ENCODE measurements at regions of chr15 and their contacts with region 1.

Region 1: GRCh38 chr15:89419382-89419984 is 76.9 kb downstream of the RHCG start:
- DNase-seq: no peak

Region 2: DNA sequence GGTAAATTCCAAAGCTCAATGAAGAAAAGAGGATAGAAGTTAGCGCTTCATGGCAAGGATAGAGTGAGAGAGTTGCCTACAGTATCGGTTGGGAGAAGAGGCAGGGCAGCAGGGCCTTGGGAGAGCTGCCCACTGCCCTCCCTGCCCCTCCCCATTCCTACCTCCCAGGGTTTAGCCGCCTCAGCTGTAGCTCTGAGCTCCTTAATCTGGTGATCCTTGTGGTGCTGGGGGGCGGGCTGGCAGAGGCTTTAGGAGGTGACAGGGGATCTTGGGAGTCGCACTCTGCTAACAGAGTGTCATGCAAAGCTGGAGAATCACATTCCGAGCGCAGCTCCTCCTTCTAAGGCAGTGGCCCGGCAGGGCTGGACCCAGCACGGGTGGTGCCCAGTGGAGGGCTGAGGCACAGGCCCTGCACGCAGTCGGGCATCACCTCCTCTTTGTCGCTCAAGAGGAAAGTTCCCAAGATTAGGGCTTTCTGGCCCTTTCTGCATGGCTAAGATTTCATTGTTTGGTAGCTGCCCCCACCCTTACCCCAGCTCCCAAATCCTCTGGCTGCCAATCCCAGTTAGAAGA is 27.7 kb before region 1 on chr15:
- intact Hi-C with region 1: loop called in 1 of 2 experiments (anchors 1 kb)
- DNase-seq: no peak

Region 3: GRCh38 chr15:89442671-89443307 is 23.3 kb after region 1 on chr15:
- intact Hi-C with region 1: no loop called
- DNase-seq: peak; percentile 81

Region 4: GRCh38 chr15:89556413-89557262 is 137.2 kb after region 1 on chr15:
- intact Hi-C with region 1: no loop called
- DNase-seq: no peak